SK-N-SH (cell line): ENCODE measurements at regions of chr7 and their contacts with region 1.

Region 1: DNA sequence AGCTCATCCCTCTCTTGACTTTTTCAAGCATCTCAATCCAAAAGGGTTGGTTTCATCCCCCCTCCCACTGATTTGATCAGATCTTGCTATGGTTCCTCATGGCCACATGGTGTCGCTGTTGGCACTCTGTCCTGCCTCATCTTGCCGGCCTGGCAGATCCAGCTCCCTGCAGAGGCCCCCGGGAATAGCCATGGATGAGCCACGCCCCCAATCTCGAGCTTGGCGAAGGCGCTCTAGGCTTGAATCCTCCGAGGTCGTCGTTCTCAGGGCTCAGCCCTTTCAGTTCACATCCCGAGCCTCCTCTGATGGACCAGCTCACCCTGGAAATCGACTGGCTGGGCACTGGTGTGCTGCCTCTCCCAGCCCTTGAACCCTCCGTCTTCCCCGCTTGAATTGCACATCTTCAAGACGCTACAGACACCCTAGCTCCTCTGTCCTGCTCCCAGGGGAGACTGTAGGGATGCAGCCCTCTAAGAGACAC is 628.7 kb downstream of the TYW1 start:
- DNase-seq: peak; percentile 86
- H3K4me3 ChIP-seq: peak overlapping the region; percentile 21 to 42; a peak in 2 of 4 replicates
- H3K27ac ChIP-seq: no peak overlapping the region
- H3K4me1 ChIP-seq: peaks cover 0 to 11% of the 10 kb centered on the region in 2 experiments; a peak in 1 of 4 replicates
- H3K27me3 ChIP-seq: no peaks in the 10 kb centered on the region
- CTCF ChIP-seq: peak; percentile 81
- EP300 ChIP-seq: 0 out of 4 replicates have a peak, but pooled peaks of 1 of the 2 experiments have one; percentile 11
- RAD21 ChIP-seq: peak; percentile 98

Region 2: DNA sequence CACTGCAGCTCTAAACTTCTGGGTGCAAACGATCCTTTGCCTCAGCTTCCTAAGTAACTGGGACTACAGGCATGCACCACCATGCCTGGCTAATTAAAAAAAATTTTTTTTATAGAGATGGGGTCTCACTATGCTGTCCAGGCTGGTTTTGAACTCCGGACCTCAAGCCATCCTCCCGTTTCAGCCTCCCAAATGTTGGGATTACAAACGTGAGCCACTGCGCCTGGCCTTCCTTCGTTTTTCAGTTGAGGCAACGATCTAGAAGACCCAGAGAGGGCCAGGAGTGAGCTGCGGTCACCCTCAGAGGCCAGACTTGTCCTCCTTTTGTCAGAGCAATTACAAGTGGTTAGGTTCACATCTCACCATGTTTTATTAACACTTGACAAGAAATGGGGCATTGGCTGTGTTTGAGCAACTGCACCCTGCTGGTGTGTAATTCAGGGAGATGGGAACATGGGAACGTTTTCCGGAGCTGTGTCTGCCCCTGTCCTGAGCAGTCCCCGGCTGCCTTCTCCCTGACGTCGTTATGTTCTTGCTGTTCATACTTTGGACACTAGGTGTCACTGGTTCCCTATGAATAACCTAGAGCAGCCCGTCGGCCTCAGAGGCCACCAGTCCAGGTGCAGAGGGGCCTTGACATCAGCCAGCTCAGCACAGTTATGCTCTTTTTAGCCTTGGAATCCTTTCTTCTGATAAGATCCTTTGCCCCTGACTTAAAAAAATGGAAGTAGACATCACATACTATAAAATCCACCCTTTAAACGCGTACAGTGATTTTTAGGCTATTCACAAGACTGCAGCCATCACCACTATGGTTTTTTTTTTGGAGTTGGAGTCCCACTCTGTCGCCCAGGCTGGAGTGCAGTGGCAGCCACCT is 253.6 kb before region 1 on chr7:
- CTCF ChIA-PET with region 1: interaction called, 18 read pairs
- POLR2A ChIA-PET with region 1: no interaction called
- DNase-seq: peak; percentile 92
- H3K4me3 ChIP-seq: no peak overlapping the region
- H3K27ac ChIP-seq: no peak overlapping the region
- H3K4me1 ChIP-seq: no peaks in the 10 kb centered on the region
- H3K27me3 ChIP-seq: no peaks in the 10 kb centered on the region
- CTCF ChIP-seq: peak; percentile 94
- EP300 ChIP-seq: no peak
- RAD21 ChIP-seq: peak; percentile 98

Region 3: DNA sequence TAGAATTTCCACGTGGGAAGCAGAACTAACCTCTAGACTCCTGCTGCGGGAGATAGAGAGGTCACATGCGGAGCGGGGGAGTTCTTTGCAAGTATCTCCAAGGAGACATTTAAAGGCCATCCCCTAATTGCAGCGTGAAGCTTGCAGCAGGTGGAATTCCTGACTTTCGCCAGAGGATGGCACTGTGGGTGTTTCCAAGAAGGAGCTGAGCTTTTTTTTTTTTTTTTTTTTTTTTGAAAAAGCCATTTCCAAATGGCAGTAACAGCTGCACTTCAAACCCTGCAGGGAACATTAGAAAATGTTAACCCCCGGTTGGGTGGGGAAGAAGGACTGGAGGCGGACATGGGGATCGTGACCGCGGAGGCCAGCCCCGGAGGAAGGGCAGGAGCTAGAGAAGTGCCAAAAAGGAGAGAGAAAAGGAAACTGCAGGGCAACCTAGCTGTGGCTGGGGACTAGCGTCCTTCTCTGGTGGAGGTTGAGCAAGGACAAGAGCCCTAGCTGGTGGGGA is 141.0 kb before region 1 on chr7:
- CTCF ChIA-PET with region 1: interaction called, 23 read pairs
- POLR2A ChIA-PET with region 1: interaction called, 4 read pairs
- DNase-seq: peak; percentile 77
- H3K4me3 ChIP-seq: peak overlapping the region; percentile 22 to 37; a peak in 3 of 4 replicates
- H3K27ac ChIP-seq: 0 out of 4 replicates have a peak overlapping the region, but pooled peaks of 1 of the 2 experiments have one; percentile 14
- H3K4me1 ChIP-seq: peaks cover 0 to 4% of the 10 kb centered on the region in 2 experiments; a peak in 1 of 4 replicates
- H3K27me3 ChIP-seq: no peaks in the 10 kb centered on the region
- CTCF ChIP-seq: peak; percentile 82
- EP300 ChIP-seq: peak in 1 of 2 experiments; percentile 76; a peak in 2 of 4 replicates
- RAD21 ChIP-seq: peak; percentile 96

Region 4: DNA sequence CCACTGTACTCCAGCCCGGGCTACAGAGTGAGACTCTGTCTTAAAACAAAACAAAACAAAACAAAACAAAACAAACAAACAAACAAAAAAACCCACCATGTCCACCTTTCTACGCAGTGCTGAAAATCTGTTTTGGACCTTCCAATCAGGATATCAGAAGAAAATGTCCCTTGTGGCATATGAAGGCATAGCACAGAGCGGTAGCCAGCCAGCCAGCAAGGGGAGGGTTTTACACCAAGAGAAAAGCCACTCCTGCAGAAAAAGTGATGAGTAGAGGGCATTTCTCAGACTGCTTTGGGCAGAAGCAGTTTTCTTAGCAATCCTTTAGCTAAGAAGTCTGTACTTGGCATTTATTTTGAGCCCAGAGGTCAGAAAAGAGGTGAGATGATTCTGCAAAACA is 16.5 kb before region 1 on chr7:
- CTCF ChIA-PET with region 1: interaction called, 17 read pairs
- POLR2A ChIA-PET with region 1: no interaction called
- DNase-seq: no peak
- H3K4me3 ChIP-seq: no peak overlapping the region
- H3K27ac ChIP-seq: no peak overlapping the region
- H3K4me1 ChIP-seq: no peaks in the 10 kb centered on the region
- H3K27me3 ChIP-seq: no peaks in the 10 kb centered on the region
- CTCF ChIP-seq: no peak
- EP300 ChIP-seq: no peak
- RAD21 ChIP-seq: no peak

Region 5: GRCh38 chr7:67637027-67637358 is 11.7 kb after region 1 on chr7:
- CTCF ChIA-PET with region 1: interaction called, 75 read pairs
- POLR2A ChIA-PET with region 1: no interaction called
- DNase-seq: no peak
- H3K4me3 ChIP-seq: no peak overlapping the region
- H3K27ac ChIP-seq: no peak overlapping the region
- H3K4me1 ChIP-seq: no peaks in the 10 kb centered on the region
- H3K27me3 ChIP-seq: no peaks in the 10 kb centered on the region
- CTCF ChIP-seq: no peak
- EP300 ChIP-seq: no peak
- RAD21 ChIP-seq: peak; percentile 56

Region 6: DNA sequence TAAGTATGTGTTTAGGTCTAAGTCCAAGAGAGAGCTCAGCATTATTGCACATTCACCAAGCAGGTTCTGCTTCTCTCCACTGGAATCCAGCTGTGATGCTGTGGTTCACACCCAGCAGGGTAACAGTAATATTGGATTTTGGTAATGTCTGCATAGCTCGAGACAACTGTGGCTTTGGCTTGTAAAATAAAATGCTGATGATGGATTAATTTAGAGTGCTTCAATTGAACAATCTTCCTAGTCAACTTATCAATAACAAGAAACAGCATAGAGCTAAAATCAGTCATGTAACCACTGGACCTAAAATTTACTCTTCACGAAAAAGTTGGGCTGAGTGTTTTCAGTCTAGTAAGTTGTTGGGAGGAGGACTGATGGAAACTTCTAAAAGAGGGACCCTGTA is 80.6 kb after region 1 on chr7:
- CTCF ChIA-PET with region 1: no interaction called
- POLR2A ChIA-PET with region 1: no interaction called
- DNase-seq: no peak
- H3K4me3 ChIP-seq: no peak overlapping the region
- H3K27ac ChIP-seq: no peak overlapping the region
- H3K4me1 ChIP-seq: no peaks in the 10 kb centered on the region
- H3K27me3 ChIP-seq: no peaks in the 10 kb centered on the region
- CTCF ChIP-seq: no peak
- EP300 ChIP-seq: no peak
- RAD21 ChIP-seq: no peak

Region 7: GRCh38 chr7:67788669-67789068 is 163.4 kb after region 1 on chr7:
- CTCF ChIA-PET with region 1: interaction called, 13 read pairs
- POLR2A ChIA-PET with region 1: no interaction called
- DNase-seq: peak; percentile 77
- H3K4me3 ChIP-seq: peak overlapping the region in 1 of 2 experiments; percentile 45; a peak in 1 of 4 replicates
- H3K27ac ChIP-seq: no peak overlapping the region
- H3K4me1 ChIP-seq: peaks cover 0 to 9% of the 10 kb centered on the region in 2 experiments; a peak in 1 of 4 replicates
- H3K27me3 ChIP-seq: no peaks in the 10 kb centered on the region
- CTCF ChIP-seq: peak; percentile 37
- EP300 ChIP-seq: peak in 1 of 2 experiments; percentile 22; a peak in 1 of 4 replicates
- RAD21 ChIP-seq: peak; percentile 95

Region 8: DNA sequence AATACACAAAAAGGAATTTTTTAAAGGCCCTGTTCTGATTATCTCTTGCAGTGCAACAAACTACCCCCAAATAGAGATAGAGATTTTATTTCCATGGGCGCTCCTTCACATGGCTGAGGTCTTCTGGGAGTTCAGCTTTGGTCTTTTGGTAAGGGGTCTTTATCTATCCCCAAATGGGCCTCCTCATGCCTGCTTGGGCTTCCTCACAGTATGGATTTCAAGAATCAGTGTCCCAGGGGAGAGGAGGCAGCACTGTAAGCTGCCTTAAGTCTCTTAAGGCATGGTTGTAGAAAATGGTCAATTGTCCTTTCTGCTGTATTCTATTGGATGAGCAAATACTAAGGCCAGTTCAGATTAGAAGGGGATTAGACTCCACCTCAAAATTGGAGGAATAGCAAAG is 337.6 kb after region 1 on chr7:
- CTCF ChIA-PET with region 1: no interaction called
- POLR2A ChIA-PET with region 1: no interaction called
- DNase-seq: no peak
- H3K4me3 ChIP-seq: no peak overlapping the region
- H3K27ac ChIP-seq: no peak overlapping the region
- H3K4me1 ChIP-seq: no peaks in the 10 kb centered on the region
- H3K27me3 ChIP-seq: no peaks in the 10 kb centered on the region
- CTCF ChIP-seq: no peak
- EP300 ChIP-seq: no peak
- RAD21 ChIP-seq: no peak

Region 9: DNA sequence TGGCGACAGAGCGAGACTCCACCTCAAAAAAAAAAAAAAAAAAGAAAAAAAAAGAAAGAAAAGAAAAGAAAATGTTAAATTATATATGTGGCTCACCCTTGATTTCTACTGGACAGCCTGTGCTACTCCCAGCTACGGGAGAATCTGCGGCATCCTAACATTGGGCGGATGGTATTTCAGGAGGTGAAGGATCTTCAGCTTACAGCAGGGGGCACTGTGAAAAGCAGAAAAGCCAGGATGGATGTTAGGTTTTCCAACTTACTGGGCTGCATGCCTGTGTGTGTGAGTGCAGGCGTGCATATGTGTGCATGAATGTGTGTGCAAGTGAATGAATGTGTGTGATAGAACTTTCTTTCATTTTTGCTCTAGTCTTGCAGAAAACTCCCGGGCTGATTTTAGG is 437.9 kb after region 1 on chr7:
- CTCF ChIA-PET with region 1: interaction called, 10 read pairs
- POLR2A ChIA-PET with region 1: no interaction called
- DNase-seq: peak; percentile 52
- H3K4me3 ChIP-seq: no peak overlapping the region
- H3K27ac ChIP-seq: no peak overlapping the region
- H3K4me1 ChIP-seq: no peaks in the 10 kb centered on the region
- H3K27me3 ChIP-seq: no peaks in the 10 kb centered on the region
- CTCF ChIP-seq: peak; percentile 45
- EP300 ChIP-seq: no peak
- RAD21 ChIP-seq: peak; percentile 66